ENCODE measurements at regions of chr7 and their contacts with region 1.

Region 1: DNA sequence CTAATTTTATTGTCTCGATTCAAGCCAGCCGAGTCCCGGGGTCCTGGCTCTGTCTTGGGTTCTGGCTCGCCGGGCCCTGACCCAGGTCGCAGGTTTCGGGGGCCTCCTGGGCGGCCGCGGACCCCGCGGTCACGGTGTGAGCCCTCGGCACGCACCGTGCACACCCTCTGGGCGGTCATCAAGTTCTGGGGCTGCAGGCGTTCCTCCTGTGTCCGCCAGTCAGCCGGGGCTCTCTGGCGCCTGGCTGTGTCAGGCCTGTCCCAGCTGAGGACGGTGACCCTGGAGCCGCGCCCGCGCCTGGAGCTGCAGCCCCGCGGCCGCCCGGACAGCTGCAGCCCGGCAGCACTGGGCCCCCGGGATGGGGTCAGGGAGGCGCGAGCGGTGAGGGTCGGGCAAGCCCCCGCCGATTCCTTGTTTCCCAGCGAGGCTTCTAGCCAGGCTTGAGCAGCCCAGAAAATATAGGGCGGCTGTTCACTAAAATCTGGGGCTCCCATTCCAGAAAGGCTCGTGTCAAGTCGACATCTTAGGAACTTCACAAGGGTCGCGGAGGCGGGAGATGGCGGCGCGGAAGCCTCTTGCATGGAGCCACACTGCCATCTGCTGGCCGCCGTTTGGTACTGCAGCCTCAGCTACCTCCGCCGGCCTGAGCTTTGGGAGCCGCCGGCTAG is 4.2 kb upstream of the HOXA7 start:
- DNase-seq: peak; percentile 83
- ATAC-seq: peak; percentile 87
- H3K4me3 Mint-ChIP-seq: peak overlapping the region; percentile 75
- H3K27ac Mint-ChIP-seq: no peak overlapping the region
- H3K4me1 Mint-ChIP-seq: peaks cover 31% of the 10 kb centered on the region
- H3K27me3 Mint-ChIP-seq: peaks cover 72% of the 10 kb centered on the region
- CTCF ChIP-seq: peak; percentile 97

Region 2: GRCh38 chr7:25894902-25895791 is 1265.5 kb before region 1 on chr7:
- CTCF ChIA-PET with region 1: interaction called, 13 read pairs
- POLR2A ChIA-PET with region 1: interaction called, 4 read pairs
- intact Hi-C with region 1: loop called (anchors 1 kb)
- DNase-seq: peak; percentile 77
- ATAC-seq: peak; percentile 88
- H3K4me3 Mint-ChIP-seq: peak overlapping the region; percentile 75
- H3K27ac Mint-ChIP-seq: peak overlapping the region; percentile 62
- H3K4me1 Mint-ChIP-seq: peaks cover 32% of the 10 kb centered on the region
- H3K27me3 Mint-ChIP-seq: peaks cover 38% of the 10 kb centered on the region
- CTCF ChIP-seq: peak; percentile 36

Region 3: DNA sequence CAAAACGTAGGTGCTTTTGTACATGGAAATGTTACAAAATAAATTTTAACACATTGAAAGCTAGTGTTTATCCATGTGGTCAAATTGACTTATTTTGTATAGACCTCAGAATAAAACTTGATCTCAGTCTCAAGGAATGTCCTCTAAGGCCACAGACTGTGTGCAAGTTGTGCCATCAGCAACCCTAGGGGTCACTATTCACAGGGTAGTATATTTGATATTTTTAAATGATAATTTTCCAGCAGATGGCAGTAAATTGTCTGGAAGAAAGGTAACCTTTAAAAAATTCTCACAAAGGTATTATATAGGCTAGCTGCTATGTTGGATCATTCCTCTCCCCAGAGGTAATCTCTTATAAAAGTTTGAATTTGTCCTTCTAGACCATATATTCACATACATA is 881.9 kb before region 1 on chr7:
- CTCF ChIA-PET with region 1: no interaction called
- POLR2A ChIA-PET with region 1: no interaction called
- intact Hi-C with region 1: loop called (anchors 2 kb)
- DNase-seq: no peak
- ATAC-seq: peak; percentile 82
- H3K4me3 Mint-ChIP-seq: no peak overlapping the region
- H3K27ac Mint-ChIP-seq: no peak overlapping the region
- H3K4me1 Mint-ChIP-seq: peaks cover 11% of the 10 kb centered on the region
- H3K27me3 Mint-ChIP-seq: peaks cover 3% of the 10 kb centered on the region
- CTCF ChIP-seq: no peak

Region 4: GRCh38 chr7:26500749-26501352 is 659.8 kb before region 1 on chr7:
- CTCF ChIA-PET with region 1: interaction called, 3 read pairs
- POLR2A ChIA-PET with region 1: no interaction called
- intact Hi-C with region 1: loop called (anchors 2 kb)
- DNase-seq: no peak
- ATAC-seq: peak; percentile 76
- H3K4me3 Mint-ChIP-seq: no peak overlapping the region
- H3K27ac Mint-ChIP-seq: no peak overlapping the region
- H3K4me1 Mint-ChIP-seq: no peaks in the 10 kb centered on the region
- H3K27me3 Mint-ChIP-seq: peaks cover 10% of the 10 kb centered on the region
- CTCF ChIP-seq: peak; percentile 29

Region 5: DNA sequence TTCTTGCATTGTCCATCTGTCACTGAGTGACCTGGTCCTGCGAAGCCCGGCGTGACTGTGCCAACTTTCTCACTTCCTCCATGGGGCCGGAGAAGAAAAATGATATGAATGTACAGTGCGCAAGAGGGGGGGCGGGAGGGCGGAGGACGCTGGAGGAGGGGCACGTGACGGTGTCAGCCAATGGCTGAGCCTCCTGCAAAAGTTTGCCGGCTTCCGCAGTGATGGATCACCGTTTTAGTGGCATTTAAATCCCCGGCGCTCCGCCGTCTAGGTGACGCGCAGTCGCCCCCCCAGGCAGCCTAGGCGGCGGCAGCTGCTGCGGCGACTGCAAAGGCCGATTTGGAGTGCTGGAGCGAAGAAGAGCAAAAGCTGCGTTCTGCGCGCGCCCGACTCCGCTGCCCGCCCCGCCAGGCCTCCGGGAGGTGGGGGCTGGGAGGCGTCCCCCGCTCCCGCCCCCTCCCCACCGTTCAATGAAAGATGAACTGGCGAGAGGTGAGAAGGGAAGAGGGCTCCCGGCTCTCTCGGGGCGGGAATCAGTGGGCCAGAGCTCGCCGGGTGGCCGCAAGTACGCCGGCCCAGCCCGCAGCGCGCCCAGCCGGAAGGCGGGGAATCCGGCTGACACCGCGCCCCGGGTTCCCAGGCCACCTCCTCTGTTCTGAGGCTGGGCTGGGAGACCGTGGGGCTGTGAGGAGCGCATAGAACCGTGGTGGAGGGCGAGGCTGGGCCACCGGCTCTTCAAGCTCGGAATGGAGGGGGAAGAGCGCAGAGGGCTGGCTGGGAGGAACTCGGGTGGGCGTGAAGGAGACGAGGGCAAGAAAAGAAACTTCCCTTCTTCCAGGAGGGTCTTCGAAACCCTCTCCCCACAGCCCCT is 64.5 kb before region 1 on chr7 and contains the start of gene HOXA1:
- CTCF ChIA-PET with region 1: interaction called, 4 read pairs
- POLR2A ChIA-PET with region 1: no interaction called
- intact Hi-C with region 1: loop called (anchors 5 kb)
- DNase-seq: peak; percentile 67
- ATAC-seq: peak; percentile 87
- H3K4me3 Mint-ChIP-seq: peak within 1 kb of the TSS; percentile 94
- H3K27ac Mint-ChIP-seq: peak within 1 kb of the TSS; percentile 76
- H3K4me1 Mint-ChIP-seq: peaks cover 33% of the 10 kb centered on the region
- H3K27me3 Mint-ChIP-seq: peaks cover 52% of the 10 kb centered on the region
- CTCF ChIP-seq: no peak
- total RNA-seq, gene HOXA1: 0.55 and 0.61 TPM in 2 replicates